Mammary epithelial cell (primary cell): ENCODE measurements at regions of chr2 and their contacts with region 1.

Region 1: GRCh38 chr2:153519257-153519875 is 40.8 kb upstream of the RPRM start:
- DNase-seq: peak; percentile 36
- H3K4me3 ChIP-seq: no peak overlapping the region
- H3K27ac ChIP-seq: no peak overlapping the region
- H3K4me1 ChIP-seq: no peaks in the 10 kb centered on the region
- H3K27me3 ChIP-seq: no peaks in the 10 kb centered on the region
- CTCF ChIP-seq: peak; percentile 67 to 70

Region 2: GRCh38 chr2:152036611-152037469 is 1482.5 kb before region 1 on chr2:
- CTCF ChIA-PET with region 1: no interaction called
- dilution Hi-C with region 1: no loop called
- in situ Hi-C with region 1: no loop called
- intact Hi-C with region 1: loop called (anchors 10 kb)
- DNase-seq: peak; percentile 46
- H3K4me3 ChIP-seq: no peak overlapping the region
- H3K27ac ChIP-seq: no peak overlapping the region
- H3K4me1 ChIP-seq: no peaks in the 10 kb centered on the region
- H3K27me3 ChIP-seq: peaks cover 3% of the 10 kb centered on the region
- CTCF ChIP-seq: peak; percentile 85 to 89

Region 3: DNA sequence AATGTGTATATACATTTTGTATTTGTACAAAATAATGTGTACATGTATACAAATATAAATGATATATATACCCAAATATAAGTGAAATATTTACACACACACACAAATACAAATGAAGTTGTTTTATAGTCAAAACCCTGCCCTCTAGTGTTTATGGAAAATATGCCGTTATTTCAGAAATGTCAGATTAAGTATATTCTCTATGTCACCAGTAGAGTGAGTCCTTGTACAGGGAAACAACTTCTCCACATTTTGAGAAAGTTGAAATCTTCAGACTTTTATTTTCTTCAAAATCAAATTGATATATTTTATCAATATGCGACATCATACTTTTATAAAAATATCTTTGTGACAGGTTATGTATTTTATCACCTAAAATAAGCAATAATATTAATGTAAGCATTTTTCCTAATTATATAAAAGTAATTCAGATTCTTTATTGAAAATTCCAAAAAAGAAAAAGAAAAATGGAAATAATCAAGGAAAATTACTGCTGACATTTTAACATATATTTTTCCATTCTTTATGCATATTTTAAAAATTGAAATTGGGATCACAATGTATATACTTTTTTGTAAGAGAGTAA is 778.5 kb before region 1 on chr2:
- CTCF ChIA-PET with region 1: no interaction called
- dilution Hi-C with region 1: no loop called
- in situ Hi-C with region 1: no loop called
- intact Hi-C with region 1: loop called (anchors 1 kb)
- DNase-seq: peak; percentile 43
- H3K4me3 ChIP-seq: no peak overlapping the region
- H3K27ac ChIP-seq: no peak overlapping the region
- H3K4me1 ChIP-seq: no peaks in the 10 kb centered on the region
- H3K27me3 ChIP-seq: no peaks in the 10 kb centered on the region
- CTCF ChIP-seq: peak; percentile 82 to 90

Region 4: GRCh38 chr2:152861349-152861942 is 657.9 kb before region 1 on chr2:
- CTCF ChIA-PET with region 1: no interaction called
- dilution Hi-C with region 1: no loop called
- in situ Hi-C with region 1: no loop called
- intact Hi-C with region 1: loop called (anchors 5 kb)
- DNase-seq: peak; percentile 14
- H3K4me3 ChIP-seq: no peak overlapping the region
- H3K27ac ChIP-seq: no peak overlapping the region
- H3K4me1 ChIP-seq: no peaks in the 10 kb centered on the region
- H3K27me3 ChIP-seq: no peaks in the 10 kb centered on the region
- CTCF ChIP-seq: peak; percentile 72 to 77

Region 5: GRCh38 chr2:153090561-153090960 is 428.8 kb before region 1 on chr2:
- CTCF ChIA-PET with region 1: no interaction called
- dilution Hi-C with region 1: no loop called
- in situ Hi-C with region 1: no loop called
- intact Hi-C with region 1: no loop called
- DNase-seq: peak; percentile 6
- H3K4me3 ChIP-seq: no peak overlapping the region
- H3K27ac ChIP-seq: no peak overlapping the region
- H3K4me1 ChIP-seq: peaks cover 6% of the 10 kb centered on the region
- H3K27me3 ChIP-seq: no peaks in the 10 kb centered on the region
- CTCF ChIP-seq: no peak

Region 6: GRCh38 chr2:153163058-153163457 is 356.3 kb before region 1 on chr2:
- CTCF ChIA-PET with region 1: no interaction called
- dilution Hi-C with region 1: no loop called
- in situ Hi-C with region 1: loop called in 1 of 2 experiments (anchors 25 kb)
- intact Hi-C with region 1: loop called (anchors 1 kb)
- DNase-seq: peak; percentile 14
- H3K4me3 ChIP-seq: no peak overlapping the region
- H3K27ac ChIP-seq: no peak overlapping the region
- H3K4me1 ChIP-seq: no peaks in the 10 kb centered on the region
- H3K27me3 ChIP-seq: no peaks in the 10 kb centered on the region
- CTCF ChIP-seq: peak; percentile 53 to 70

Region 7: DNA sequence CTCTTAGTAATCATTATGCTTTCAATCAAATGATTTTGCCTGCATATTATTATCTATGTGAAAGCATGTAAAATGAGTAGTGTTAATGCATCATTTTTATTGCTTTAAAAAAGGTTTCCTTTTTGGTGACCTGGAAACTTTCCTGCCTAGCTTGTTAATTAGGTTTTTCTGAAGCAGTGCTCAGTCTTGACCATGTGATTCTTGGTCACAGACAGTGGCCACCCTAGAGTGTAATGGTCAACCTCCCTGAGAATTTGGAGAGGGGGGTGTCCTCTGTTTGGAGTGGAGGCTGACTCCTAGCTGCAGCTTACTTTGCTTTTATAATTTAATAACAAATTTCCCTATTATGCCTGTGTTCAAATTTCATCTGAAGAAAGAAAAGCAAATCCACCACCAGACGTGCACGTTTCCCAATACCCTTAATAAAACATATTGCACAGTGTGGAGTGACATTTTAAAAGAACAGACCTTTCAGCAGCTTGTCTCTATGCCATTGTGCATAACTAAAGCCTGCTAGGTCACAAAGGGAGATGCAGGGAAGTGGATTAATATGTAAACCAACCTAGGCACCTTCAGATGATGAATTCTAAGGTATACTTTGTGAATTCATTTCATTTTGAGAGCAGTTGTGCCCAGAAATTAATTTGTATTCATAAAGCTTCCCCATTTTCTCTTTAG is 171.4 kb before region 1 on chr2:
- CTCF ChIA-PET with region 1: no interaction called
- dilution Hi-C with region 1: no loop called
- in situ Hi-C with region 1: no loop called
- intact Hi-C with region 1: loop called (anchors 5 kb)
- DNase-seq: no peak
- H3K4me3 ChIP-seq: no peak overlapping the region
- H3K27ac ChIP-seq: no peak overlapping the region
- H3K4me1 ChIP-seq: no peaks in the 10 kb centered on the region
- H3K27me3 ChIP-seq: peaks cover 4% of the 10 kb centered on the region
- CTCF ChIP-seq: no peak

Region 8: GRCh38 chr2:154280543-154280942 is 761.2 kb after region 1 on chr2:
- CTCF ChIA-PET with region 1: no interaction called
- dilution Hi-C with region 1: no loop called
- in situ Hi-C with region 1: no loop called
- intact Hi-C with region 1: no loop called
- DNase-seq: no peak
- H3K4me3 ChIP-seq: no peak overlapping the region
- H3K27ac ChIP-seq: no peak overlapping the region
- H3K4me1 ChIP-seq: no peaks in the 10 kb centered on the region
- H3K27me3 ChIP-seq: peaks cover 6% of the 10 kb centered on the region
- CTCF ChIP-seq: no peak

Region 9: DNA sequence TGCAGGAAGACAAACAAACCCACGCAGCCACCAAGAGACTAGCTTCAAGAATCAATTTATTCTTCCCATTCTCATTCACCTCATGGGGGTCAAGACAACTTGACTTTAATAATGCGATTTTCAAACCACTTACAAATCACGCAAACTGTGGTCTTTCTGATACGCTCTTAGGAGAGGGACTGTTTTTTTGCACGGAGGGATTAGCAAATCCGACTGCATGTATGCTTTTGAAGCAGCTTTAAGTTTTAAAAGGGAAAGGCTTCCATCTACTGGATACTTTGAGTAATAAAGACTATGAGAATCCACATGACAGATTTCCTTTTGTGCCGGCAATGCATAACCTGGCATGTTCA is 856.2 kb after region 1 on chr2:
- CTCF ChIA-PET with region 1: interaction called, 4 read pairs
- dilution Hi-C with region 1: no loop called
- in situ Hi-C with region 1: no loop called
- intact Hi-C with region 1: loop called (anchors 10 kb)
- DNase-seq: peak; percentile 28
- H3K4me3 ChIP-seq: no peak overlapping the region
- H3K27ac ChIP-seq: no peak overlapping the region
- H3K4me1 ChIP-seq: no peaks in the 10 kb centered on the region
- H3K27me3 ChIP-seq: no peaks in the 10 kb centered on the region
- CTCF ChIP-seq: peak; percentile 31 to 52